ENCODE measurements at regions of chr17 and their contacts with region 1.

Region 1: DNA sequence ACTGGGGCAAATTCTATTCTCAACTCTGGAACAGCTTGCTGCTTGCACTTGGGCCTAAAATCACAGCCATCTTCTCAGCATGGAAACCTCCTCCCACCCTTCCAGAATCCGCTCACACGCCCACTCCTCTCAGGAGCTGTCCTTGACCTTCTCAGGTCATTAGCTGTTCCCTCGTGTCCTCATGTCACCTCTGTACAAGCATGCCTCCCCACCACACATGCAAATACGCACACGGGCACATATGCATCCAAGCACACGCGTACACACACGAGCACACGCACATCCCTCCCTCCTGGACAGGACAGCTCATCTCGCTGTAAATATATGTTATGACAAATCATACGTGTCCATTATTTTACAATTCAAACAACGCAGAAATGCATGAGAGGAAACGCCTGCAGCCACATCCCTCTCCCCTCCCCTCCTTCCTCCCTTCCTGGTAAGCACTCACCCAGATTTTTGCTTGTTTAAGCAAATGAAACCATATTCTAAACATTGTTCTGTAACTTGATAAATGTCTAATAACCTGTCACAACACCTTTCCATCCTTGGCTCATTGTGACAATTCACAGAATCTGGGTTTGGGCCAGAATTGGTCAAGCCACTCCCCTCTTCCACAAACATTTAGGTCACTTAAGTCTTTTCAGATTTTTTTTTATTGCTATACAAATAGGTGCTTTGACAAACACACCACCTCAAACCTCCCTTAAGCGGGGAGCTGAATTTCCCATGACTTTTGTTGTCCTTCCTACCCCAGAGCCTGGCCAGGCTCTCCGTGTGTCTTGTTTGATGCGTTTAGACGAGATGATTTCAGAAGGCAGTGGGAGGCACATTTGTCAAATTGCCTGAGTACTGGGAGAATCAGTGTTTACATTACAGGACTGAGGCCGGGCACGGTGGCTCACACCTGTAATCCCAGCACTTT is 41.7 kb downstream of the DNAH17 start:
- DNase-seq: peak; percentile 58

Region 2: DNA sequence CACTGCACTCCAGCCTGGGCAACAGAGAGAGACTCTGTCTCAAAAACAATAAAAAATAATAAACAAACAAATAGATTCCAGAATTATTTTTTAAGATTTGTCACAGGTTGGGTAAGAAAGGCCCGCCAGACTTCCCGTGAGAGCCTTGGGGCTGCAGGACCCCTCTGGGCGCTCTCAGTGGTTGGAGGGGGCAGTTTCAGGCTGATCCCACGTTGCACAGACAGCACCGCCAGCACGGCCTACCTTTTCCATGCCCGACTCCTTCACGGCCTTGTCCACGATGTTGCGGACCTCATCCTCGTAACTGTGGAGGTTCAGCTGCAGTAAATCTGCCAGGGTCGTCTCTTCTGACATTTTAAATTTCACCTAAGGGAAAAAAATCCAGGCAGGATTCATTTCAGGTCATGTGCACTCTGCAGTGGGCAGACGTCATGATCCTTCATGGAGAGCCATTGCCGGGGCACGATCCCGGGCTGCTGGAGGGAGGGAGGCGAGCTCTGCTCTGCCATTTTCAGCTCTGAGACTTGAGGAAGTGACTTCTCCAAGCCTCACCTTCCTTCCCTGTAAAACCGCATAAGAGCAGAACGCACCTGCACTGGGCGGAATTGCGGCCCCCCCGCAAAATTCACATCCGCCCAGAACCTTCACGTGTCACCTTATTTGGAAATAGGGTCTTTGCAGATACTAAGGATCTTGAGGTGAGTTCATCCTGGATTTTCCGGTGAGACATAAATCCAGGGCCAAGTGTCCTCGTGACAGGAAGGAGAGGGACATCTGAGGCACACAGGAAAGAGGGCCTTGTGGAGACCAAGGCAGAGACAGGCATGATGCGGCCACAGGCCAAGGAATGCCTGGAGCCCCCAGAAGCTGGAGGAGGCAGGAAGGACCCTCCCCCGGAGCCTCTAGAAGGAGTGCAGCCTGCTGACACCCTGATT is 25.1 kb before region 1 on chr17:
- intact Hi-C with region 1: loop called in 1 of 2 experiments (anchors 2 kb)
- DNase-seq: no peak

Region 3: DNA sequence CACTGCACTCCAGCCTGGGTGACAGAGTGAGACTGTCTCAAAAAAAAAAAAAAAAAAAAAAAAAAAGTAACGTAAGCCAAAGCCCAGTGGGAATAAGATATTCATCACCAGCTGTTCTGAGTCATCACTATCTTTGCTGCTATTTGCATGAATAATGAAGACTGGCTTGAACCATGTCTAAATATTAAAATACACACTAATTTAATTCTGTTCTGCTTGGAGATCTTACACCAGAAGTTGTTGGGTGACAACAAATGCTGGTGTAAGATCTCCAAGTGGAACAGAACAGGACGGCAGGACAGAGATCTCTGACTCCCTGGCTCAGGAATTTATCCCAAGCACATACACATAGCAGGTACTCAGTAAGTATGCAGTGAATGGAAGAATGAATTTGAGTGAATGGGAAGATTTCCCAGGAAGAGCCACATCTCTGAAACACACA is 22.1 kb after region 1 on chr17:
- intact Hi-C with region 1: no loop called
- DNase-seq: no peak

Region 4: GRCh38 chr17:78583091-78583490 is 47.6 kb after region 1 on chr17:
- intact Hi-C with region 1: no loop called
- DNase-seq: no peak

Measured in posterior vena cava (tissue), 2 donors.